WTC11 (cell line): ENCODE measurements at regions of chr11 and their contacts with region 1.

Region 1: GRCh38 chr11:63023841-63024648 is 8.4 kb upstream of the SLC22A8 start:
- DNase-seq: peak; percentile 91
- ATAC-seq: peak; percentile 60
- H3K4me3 Mint-ChIP-seq: no peak overlapping the region
- H3K27ac Mint-ChIP-seq: no peak overlapping the region
- H3K4me1 Mint-ChIP-seq: peaks cover 16% of the 10 kb centered on the region
- H3K27me3 Mint-ChIP-seq: peaks cover 14% of the 10 kb centered on the region
- CTCF ChIP-seq: peak; percentile 100

Region 2: GRCh38 chr11:62664405-62665074 is 359.5 kb before region 1 on chr11:
- CTCF ChIA-PET with region 1: no interaction called
- POLR2A ChIA-PET with region 1: no interaction called
- DNase-seq: peak; percentile 60
- ATAC-seq: peak; percentile 29
- H3K4me3 Mint-ChIP-seq: peak overlapping the region; percentile 97
- H3K27ac Mint-ChIP-seq: peak overlapping the region; percentile 95
- H3K4me1 Mint-ChIP-seq: peaks cover 16% of the 10 kb centered on the region
- H3K27me3 Mint-ChIP-seq: no peaks in the 10 kb centered on the region
- CTCF ChIP-seq: no peak

Region 3: DNA sequence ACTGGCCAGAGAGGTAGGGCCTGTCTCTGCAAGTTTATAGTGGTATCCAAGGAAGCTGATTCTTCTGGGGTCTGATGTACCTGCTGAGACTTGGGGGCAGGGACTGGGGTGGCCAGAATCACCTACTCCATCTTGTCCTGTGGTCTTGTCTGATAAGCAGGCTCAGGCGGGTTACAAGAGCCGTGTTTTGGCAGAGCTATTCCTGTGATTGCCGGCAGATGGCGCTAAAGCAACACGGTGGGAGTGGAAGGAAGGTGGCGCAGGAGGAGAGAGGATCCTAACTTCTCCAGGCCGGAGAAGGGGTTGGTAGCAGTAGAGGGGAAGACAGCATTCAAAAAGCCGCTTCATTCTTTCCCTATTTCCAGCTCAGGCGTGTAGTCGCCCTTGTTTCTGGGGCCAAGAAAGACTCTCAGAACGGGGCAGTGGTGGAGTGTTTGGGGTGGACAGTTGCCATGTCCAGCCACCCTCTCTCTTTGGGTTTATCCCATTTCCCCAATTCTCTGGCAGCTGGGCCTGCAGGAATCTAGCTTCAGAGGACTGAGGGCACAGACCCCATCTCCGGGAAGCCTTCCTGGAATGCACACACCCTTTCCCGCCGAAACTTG is 118.0 kb before region 1 on chr11:
- CTCF ChIA-PET with region 1: interaction called, 535 read pairs
- POLR2A ChIA-PET with region 1: interaction called, 5 read pairs
- DNase-seq: peak; percentile 94
- ATAC-seq: peak; percentile 54
- H3K4me3 Mint-ChIP-seq: no peak overlapping the region
- H3K27ac Mint-ChIP-seq: no peak overlapping the region
- H3K4me1 Mint-ChIP-seq: peaks cover 31% of the 10 kb centered on the region
- H3K27me3 Mint-ChIP-seq: peaks cover 13% of the 10 kb centered on the region
- CTCF ChIP-seq: peak; percentile 99

Region 4: GRCh38 chr11:62931499-62932278 is 92.4 kb before region 1 on chr11:
- CTCF ChIA-PET with region 1: interaction called, 34 read pairs
- POLR2A ChIA-PET with region 1: no interaction called
- DNase-seq: no peak
- ATAC-seq: no peak
- H3K4me3 Mint-ChIP-seq: no peak overlapping the region
- H3K27ac Mint-ChIP-seq: no peak overlapping the region
- H3K4me1 Mint-ChIP-seq: peaks cover 23% of the 10 kb centered on the region
- H3K27me3 Mint-ChIP-seq: peaks cover 34% of the 10 kb centered on the region
- CTCF ChIP-seq: no peak

Region 5: GRCh38 chr11:62988276-62988675 is 35.8 kb before region 1 on chr11:
- CTCF ChIA-PET with region 1: interaction called, 52 read pairs
- POLR2A ChIA-PET with region 1: no interaction called
- DNase-seq: no peak
- ATAC-seq: no peak
- H3K4me3 Mint-ChIP-seq: no peak overlapping the region
- H3K27ac Mint-ChIP-seq: no peak overlapping the region
- H3K4me1 Mint-ChIP-seq: no peaks in the 10 kb centered on the region
- H3K27me3 Mint-ChIP-seq: peaks cover 4% of the 10 kb centered on the region
- CTCF ChIP-seq: no peak

Region 6: DNA sequence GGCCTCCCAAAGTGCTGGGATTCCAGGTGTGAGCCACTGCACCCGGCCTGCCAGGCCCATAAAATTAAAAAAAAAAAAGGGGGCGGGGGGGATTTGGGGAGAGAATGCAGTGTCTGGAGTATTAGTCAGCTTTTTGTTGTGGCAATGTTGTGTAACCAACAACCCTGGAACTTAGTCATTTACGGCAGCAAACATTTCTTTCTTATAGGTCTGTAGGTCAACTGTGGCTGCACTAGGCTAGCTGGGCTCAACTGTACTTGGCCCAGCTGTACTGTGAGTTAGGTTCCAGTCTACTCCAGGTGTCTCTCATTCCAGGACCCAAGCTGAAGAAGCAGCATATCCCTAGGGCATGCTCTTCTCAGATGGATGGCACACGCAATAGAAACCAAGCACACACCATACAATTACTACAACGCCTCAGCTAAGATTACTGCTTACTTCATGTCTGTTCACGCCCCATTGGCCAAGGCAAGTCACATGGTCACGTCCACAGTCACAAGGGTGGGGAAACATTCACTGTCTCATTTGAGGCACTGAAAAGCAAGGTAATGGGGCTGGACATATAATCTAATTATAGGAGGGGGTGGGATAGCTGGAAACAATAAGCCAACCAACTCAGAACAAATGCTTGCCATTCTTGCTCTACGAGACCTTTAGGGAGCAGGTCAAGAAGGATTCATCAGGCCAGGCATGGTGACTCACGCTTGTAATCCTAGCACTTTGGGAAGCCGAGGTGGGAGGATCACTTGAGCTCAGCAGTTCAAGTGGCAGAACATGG is 778.8 kb after region 1 on chr11:
- CTCF ChIA-PET with region 1: no interaction called
- POLR2A ChIA-PET with region 1: no interaction called
- DNase-seq: no peak
- ATAC-seq: peak; percentile 43
- H3K4me3 Mint-ChIP-seq: no peak overlapping the region
- H3K27ac Mint-ChIP-seq: no peak overlapping the region
- H3K4me1 Mint-ChIP-seq: 0 out of 2 replicates have a peak, but pooled peaks cover 3% of the 10 kb centered on the region
- H3K27me3 Mint-ChIP-seq: peaks cover 23% of the 10 kb centered on the region
- CTCF ChIP-seq: no peak